Naive thymus-derived CD4-positive, alpha-beta T cell (primary cell): ENCODE measurements at regions of chr20 and their contacts with region 1.

Region 1: DNA sequence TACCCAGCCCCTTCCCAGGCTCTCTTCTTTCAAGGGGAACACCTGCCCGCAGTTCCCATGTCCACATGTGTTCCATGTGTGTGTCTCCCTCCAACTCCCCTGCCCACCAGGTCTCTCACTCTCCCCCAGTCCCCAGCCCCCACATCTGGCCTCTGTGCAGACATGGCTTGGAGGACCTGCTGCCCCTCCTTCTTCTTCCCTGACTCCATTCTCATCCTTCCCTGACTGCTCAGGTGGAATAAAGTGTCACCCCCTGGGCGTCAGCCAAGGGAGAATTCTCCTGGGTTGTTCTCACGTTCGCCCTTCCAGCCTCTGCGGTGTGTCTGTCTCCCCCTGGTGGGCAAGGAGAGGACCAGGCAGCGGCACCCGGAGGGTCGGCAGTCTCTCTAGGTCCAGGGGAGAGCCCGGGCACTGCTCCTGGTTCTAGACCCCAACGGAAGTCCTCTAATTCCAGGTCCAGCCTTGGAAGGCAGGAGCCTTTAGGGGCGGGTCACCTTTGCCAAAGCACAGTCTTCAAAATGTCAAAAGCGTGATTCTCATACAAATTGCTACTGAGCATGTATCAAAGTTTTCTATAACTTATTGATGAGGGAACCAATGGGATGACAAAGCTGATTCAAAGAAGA is 50.5 kb downstream of the EBF4 start:
- DNase-seq: peak; percentile 51 to 84 (median 73)
- ATAC-seq: peak; percentile 75
- H3K4me3 ChIP-seq: peak overlapping the region; percentile 29
- H3K4me3 Mint-ChIP-seq: peak overlapping the region; percentile 66 to 85 (median 76)
- H3K27ac ChIP-seq: peak overlapping the region; percentile 65
- H3K27ac Mint-ChIP-seq: peak overlapping the region; percentile 87 to 99 (median 94)
- H3K4me1 ChIP-seq: peaks cover 30 to 48% of the 10 kb centered on the region in 2 donors
- H3K4me1 Mint-ChIP-seq: peaks cover 34 to 54% (median 50%) of the 10 kb centered on the region in 7 donors
- H3K27me3 ChIP-seq: no peaks in the 10 kb centered on the region
- H3K27me3 Mint-ChIP-seq: peaks cover 0 to 21% (median 0%) of the 10 kb centered on the region in 5 donors

Region 2: DNA sequence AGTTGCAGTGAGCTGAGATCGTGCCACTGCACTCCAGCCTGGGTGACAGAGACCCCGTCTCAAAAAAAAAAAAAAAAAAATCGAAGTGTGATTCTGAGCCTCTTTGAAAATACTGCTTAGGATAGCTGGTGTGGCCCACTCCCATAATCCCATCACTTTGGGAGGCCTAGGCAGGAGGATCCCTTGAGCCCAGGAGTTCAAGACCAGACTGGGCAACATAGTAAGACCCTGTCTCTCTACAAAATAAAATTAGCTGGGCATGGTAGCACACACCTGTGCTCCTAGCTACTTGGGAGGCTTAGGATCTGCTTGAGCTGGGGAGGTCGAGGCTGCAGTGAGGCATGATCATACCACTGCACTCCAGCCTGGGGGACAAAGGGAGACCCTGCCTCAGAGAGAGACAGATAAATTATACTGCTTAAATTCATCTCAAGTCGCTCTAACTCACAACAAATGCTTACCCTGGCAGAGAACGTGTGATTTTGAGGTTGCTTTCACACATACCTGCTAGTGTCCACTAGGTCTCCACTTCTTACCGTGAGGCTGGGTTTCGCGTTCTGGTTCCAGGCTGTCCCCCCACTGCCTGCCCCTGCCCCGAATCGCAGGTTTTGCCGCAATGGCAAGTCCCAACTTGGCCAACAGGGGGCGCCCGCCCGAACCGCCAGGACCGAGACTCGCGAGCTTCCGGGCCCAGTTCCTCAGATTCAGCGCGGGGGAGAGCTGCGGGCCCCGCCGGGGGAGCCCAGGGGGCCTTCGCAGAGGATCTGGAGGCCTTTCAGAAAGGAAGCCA is 218.9 kb before region 1 on chr20:
- CTCF ChIA-PET with region 1: interaction called, 3 read pairs
- POLR2A ChIA-PET with region 1: no interaction called
- intact Hi-C with region 1: loop called in 1 of 2 experiments (anchors 5 kb)
- DNase-seq: peak; percentile 82 to 97 (median 91)
- ATAC-seq: peak; percentile 96
- H3K4me3 ChIP-seq: peak overlapping the region; percentile 92
- H3K4me3 Mint-ChIP-seq: peak overlapping the region; percentile 80 to 94 (median 90)
- H3K27ac ChIP-seq: peak overlapping the region; percentile 76
- H3K27ac Mint-ChIP-seq: peak overlapping the region; percentile 62 to 94 (median 86)
- H3K4me1 ChIP-seq: peaks cover 0 to 5% of the 10 kb centered on the region in 2 donors
- H3K4me1 Mint-ChIP-seq: peaks cover 6 to 24% (median 10%) of the 10 kb centered on the region in 7 donors
- H3K27me3 ChIP-seq: no peaks in the 10 kb centered on the region
- H3K27me3 Mint-ChIP-seq: peaks cover 0 to 4% (median 0%) of the 10 kb centered on the region in 5 donors

Region 3: DNA sequence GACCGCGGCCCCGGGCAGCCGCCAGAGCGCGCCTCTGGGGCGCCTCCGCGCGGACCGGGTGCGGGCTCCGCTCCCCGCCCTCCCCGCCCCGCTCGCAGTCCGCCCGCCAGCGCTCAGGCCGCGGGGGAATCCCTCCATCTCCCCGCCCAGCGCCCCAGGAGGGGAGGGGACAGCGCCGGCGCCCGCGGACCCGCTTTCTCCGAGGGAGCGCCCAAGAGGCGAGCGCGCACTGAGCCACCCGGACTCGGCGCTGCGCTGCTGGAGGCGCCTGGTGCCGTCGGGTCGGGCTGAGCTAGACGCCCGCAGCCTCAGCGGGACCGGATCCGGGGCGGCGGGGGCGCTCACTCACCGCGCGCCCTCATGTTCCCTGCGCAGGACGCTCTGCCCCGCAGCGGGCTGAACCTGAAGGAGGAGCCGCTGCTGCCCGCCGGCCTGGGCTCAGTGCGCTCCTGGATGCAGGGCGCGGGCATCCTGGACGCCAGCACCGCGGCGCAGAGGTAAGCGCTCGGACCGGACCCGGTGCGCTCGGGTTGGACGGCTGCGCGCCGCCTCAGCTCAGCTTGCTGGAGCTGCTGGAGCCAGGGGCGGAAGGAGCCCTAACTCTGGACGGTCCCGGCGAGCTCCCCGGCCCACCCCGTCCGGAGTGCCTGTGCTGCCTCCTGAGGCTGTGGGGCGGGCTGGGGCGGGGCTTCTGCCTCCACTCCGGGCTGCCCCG is 49.6 kb before region 1 on chr20:
- CTCF ChIA-PET with region 1: interaction called, 23 read pairs
- POLR2A ChIA-PET with region 1: interaction called, 22 read pairs
- intact Hi-C with region 1: loop called (anchors 1 kb)
- DNase-seq: peak; percentile 15 to 70 (median 38)
- ATAC-seq: peak; percentile 73
- H3K4me3 ChIP-seq: no peak overlapping the region
- H3K4me3 Mint-ChIP-seq: peak overlapping the region in 4 of 10 donors; percentile 14 to 72 (median 42)
- H3K27ac ChIP-seq: no peak overlapping the region
- H3K27ac Mint-ChIP-seq: no peak overlapping the region
- H3K4me1 ChIP-seq: peaks cover 2% of the 10 kb centered on the region in 2 donors
- H3K4me1 Mint-ChIP-seq: peaks cover 16 to 26% (median 20%) of the 10 kb centered on the region in 7 donors
- H3K27me3 ChIP-seq: peaks cover 4 to 9% of the 10 kb centered on the region in 2 donors
- H3K27me3 Mint-ChIP-seq: peaks cover 16 to 55% (median 23%) of the 10 kb centered on the region in 5 donors

Region 4: DNA sequence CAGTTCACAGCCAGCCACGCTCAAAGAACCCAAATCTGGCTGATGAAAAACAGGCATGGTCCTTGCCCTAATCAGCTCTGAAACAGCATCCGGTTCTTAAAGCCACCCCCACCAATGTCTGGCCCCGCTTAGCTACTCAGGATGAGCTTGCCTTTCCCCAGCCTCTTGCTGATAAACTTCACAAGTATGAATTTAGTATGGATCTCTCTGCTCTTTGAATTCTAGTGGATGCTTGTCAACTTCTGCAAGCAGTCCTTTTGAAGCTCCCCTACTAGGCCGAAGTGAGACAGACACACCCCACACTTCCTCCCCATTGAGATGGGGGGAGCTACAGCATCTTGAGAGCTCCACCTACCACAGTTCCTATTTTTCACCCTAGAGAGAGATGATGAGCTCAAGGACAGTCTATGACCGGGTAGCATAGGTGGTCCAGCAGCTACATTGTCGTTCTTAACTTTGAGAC is 13.8 kb before region 1 on chr20:
- CTCF ChIA-PET with region 1: interaction called, 163 read pairs
- POLR2A ChIA-PET with region 1: interaction called, 236 read pairs
- intact Hi-C with region 1: loop called in 1 of 2 experiments (anchors 1 kb)
- DNase-seq: peak in 7 of 9 donors; percentile 50 to 72 (median 66)
- ATAC-seq: peak; percentile 95
- H3K4me3 ChIP-seq: peak overlapping the region; percentile 2
- H3K4me3 Mint-ChIP-seq: peak overlapping the region; percentile 55 to 87 (median 71)
- H3K27ac ChIP-seq: peak overlapping the region; percentile 62
- H3K27ac Mint-ChIP-seq: peak overlapping the region; percentile 71 to 96 (median 90)
- H3K4me1 ChIP-seq: peaks cover 20 to 33% of the 10 kb centered on the region in 2 donors
- H3K4me1 Mint-ChIP-seq: peaks cover 9 to 47% (median 36%) of the 10 kb centered on the region in 7 donors
- H3K27me3 ChIP-seq: no peaks in the 10 kb centered on the region
- H3K27me3 Mint-ChIP-seq: peaks cover 0 to 36% (median 0%) of the 10 kb centered on the region in 5 donors

Region 5: DNA sequence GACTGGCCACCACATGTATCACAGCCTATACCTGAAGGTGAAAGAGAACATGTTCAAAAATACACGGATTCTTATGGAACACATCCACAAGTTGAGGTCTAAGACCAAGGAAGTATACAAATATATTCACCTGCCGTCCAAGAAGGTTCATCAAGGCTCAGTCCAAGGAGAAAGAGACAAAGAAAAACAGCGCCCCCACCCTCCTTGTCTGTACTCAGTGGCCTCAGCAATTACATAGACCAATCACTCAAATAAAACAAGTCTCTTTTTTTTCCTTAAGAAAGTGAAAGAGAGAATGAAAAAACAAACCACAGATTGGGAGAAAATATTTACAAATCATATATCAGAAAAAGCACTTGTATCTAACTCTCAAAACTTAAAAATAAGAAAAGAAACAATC is 37.9 kb after region 1 on chr20:
- CTCF ChIA-PET with region 1: no interaction called
- POLR2A ChIA-PET with region 1: no interaction called
- intact Hi-C with region 1: no loop called
- DNase-seq: no peak
- ATAC-seq: no peak
- H3K4me3 ChIP-seq: no peak overlapping the region
- H3K4me3 Mint-ChIP-seq: no peak overlapping the region
- H3K27ac ChIP-seq: no peak overlapping the region
- H3K27ac Mint-ChIP-seq: no peak overlapping the region
- H3K4me1 ChIP-seq: no peaks in the 10 kb centered on the region
- H3K4me1 Mint-ChIP-seq: peaks cover 0 to 2% (median 0%) of the 10 kb centered on the region in 7 donors
- H3K27me3 ChIP-seq: no peaks in the 10 kb centered on the region
- H3K27me3 Mint-ChIP-seq: peaks cover 0 to 39% (median 8%) of the 10 kb centered on the region in 5 donors